Aorta (tissue), 5 donors: ENCODE measurements at regions of chr2 and their contacts with region 1.

Region 1: GRCh38 chr2:197453161-197453914 is at the start of gene COQ10B:
- DNase-seq: peak; percentile 100
- ATAC-seq: peak; percentile 99
- H3K4me3 ChIP-seq: peak within 1 kb of the TSS; percentile 53 to 75
- H3K27ac ChIP-seq: peak within 1 kb of the TSS; percentile 77 to 94
- H3K4me1 ChIP-seq: no peaks in the 10 kb centered on the region
- H3K27me3 ChIP-seq: no peaks in the 10 kb centered on the region
- total RNA-seq, gene COQ10B: 26.0 to 39.8 TPM

Region 2: GRCh38 chr2:196337208-196337953 is 1116.0 kb before region 1 on chr2:
- intact Hi-C with region 1: no loop called
- DNase-seq: no peak
- ATAC-seq: no peak
- H3K4me3 ChIP-seq: no peak overlapping the region
- H3K27ac ChIP-seq: no peak overlapping the region
- H3K4me1 ChIP-seq: no peaks in the 10 kb centered on the region
- H3K27me3 ChIP-seq: no peaks in the 10 kb centered on the region

Region 3: DNA sequence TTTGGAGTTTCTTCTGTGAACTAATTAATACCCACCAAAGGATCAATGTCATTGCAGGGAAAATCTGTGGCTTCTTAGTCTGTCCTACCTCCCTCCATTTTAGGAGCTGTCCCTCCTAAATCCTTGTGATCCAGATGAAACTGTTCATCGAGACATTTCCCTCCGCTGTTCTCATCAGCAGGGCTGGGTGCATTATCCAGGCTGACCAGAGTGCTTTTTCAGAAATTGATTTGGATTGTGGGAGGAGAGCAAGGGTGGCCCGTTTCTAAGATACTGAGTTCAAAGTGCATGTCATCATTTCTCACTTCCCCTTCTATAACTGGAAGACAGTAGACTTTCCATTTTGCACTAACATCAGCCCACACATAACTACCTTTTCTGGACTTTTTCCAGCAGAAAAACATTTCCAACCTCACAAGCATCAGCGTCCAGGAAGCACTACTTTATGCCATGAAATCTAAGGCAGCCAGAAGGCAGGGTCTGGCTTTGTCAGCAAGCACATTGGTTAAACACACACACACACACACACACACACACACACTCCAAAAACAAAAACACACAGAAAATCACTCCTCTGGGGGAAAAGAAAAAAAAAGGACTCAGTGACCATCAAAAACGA is 236.9 kb before region 1 on chr2:
- intact Hi-C with region 1: no loop called
- DNase-seq: no peak
- ATAC-seq: no peak
- H3K4me3 ChIP-seq: no peak overlapping the region
- H3K27ac ChIP-seq: no peak overlapping the region
- H3K4me1 ChIP-seq: peaks cover 8 to 17% of the 10 kb centered on the region in 2 donors
- H3K27me3 ChIP-seq: no peaks in the 10 kb centered on the region

Region 4: GRCh38 chr2:197309691-197310231 is 143.6 kb before region 1 on chr2:
- intact Hi-C with region 1: no loop called
- DNase-seq: peak; percentile 59 to 78
- ATAC-seq: peak; percentile 20
- H3K4me3 ChIP-seq: peak overlapping the region; percentile 78 to 97
- H3K27ac ChIP-seq: peak overlapping the region; percentile 43 to 55
- H3K4me1 ChIP-seq: peaks cover 2 to 9% of the 10 kb centered on the region in 2 donors
- H3K27me3 ChIP-seq: no peaks in the 10 kb centered on the region

Region 5: DNA sequence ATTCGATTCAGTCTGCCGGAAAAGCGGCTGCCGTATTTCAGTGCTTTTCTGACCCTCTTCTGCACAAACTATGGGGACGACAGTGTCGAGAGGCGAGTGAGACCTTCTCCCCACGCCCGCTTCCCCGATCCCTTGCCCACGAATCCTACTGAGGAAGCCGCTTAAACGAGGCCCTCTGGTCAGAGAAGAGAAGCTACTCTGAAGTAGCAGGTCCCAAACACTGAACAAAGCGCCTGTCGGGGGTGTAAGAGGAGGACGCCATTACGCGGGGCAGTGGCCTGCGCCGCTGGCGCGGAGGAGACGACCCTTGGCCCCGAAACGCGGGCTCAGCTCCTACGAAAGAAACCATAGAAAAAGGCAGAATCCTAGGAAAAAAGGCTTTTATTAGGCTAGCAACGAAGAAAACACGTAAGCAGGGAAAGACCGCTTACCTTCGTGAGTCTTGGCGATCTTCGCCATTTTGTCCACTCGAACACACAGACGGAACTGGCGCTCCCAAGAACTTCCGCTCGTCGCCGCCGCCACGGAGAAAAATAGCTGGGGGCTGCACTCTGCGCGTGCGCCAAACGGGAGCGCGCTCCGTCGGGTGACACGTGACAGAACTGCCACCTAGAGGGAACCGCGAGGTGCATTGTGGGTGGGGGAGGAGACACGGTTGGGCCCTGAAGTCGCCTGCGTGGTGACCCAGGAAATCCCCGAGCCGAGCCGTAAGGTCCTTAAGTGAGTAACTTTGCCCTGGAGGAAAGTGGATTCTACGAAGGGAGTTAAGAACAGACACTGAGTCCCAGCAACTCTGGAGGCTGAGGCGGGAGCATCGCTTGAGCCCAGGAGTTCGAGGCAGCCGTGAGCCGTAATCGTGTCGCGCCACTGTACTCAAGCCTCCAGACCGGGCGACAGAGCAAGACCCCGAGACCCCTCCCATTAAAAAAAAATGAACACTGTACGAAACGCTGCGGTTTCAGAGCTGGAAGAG is 18.5 kb before region 1 on chr2 and contains the start of gene SF3B1:
- intact Hi-C with region 1: loop called in 1 of 2 experiments (anchors 1 kb)
- DNase-seq: peak; percentile 99
- ATAC-seq: peak; percentile 100
- H3K4me3 ChIP-seq: peak within 1 kb of the TSS; percentile 82 to 100
- H3K27ac ChIP-seq: peak within 1 kb of the TSS; percentile 97 to 99
- H3K4me1 ChIP-seq: peaks cover 2 to 8% of the 10 kb centered on the region in 2 donors
- H3K27me3 ChIP-seq: no peaks in the 10 kb centered on the region
- total RNA-seq, gene SF3B1: 281 to 337 TPM

Region 6: GRCh38 chr2:197510961-197511360 is 57.6 kb after region 1 on chr2:
- intact Hi-C with region 1: no loop called
- DNase-seq: no peak
- ATAC-seq: no peak
- H3K4me3 ChIP-seq: no peak overlapping the region
- H3K27ac ChIP-seq: no peak overlapping the region
- H3K4me1 ChIP-seq: no peaks in the 10 kb centered on the region
- H3K27me3 ChIP-seq: no peaks in the 10 kb centered on the region

Region 7: DNA sequence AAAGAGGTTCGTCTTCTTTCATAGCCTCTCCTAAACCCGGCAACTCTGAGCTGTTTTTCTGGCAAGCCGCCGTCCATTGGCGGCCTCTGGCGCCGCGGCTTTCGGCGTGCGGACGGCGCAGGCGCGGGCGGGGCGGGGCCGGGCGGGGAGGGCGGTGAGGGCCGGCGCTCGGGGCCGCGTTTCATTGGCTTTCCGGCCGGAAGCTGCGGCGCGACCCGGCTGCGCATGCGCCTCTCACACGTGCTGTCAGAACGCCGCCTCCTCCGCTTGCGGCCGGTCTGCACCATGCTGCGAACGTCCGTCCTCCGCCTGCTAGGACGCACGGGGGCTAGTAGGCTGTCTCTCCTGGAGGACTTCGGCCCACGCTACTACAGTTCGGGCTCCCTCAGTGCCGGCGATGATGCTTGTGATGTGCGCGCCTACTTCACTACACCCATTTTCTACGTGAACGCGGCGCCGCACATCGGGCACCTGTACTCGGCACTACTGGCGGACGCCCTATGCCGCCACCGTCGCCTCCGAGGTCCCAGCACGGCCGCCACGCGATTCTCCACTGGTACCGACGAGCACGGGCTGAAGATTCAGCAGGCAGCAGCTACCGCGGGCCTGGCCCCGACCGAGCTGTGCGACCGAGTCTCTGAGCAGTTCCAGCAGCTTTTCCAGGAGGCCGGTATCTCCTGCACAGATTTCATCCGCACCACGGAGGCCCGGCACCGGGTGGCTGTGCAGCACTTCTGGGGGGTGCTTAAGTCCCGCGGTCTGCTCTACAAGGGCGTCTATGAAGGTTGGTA is 252.0 kb after region 1 on chr2 and contains the start of gene MARS2:
- intact Hi-C with region 1: loop called in 1 of 2 experiments (anchors 10 kb)
- DNase-seq: peak; percentile 96 to 98
- ATAC-seq: peak; percentile 98
- H3K4me3 ChIP-seq: peak within 1 kb of the TSS; percentile 72 to 80
- H3K27ac ChIP-seq: peak within 1 kb of the TSS; percentile 21 to 55
- H3K4me1 ChIP-seq: peaks cover 0 to 5% of the 10 kb centered on the region in 2 donors
- H3K27me3 ChIP-seq: no peaks in the 10 kb centered on the region
- total RNA-seq, gene MARS2: 3.6 to 3.7 TPM